ENCODE measurements at regions of chr19 and their contacts with region 1.

Region 1: GRCh38 chr19:17346109-17346671 is 8.8 kb downstream of the GTPBP3 start:
- DNase-seq: peak; percentile 79
- ATAC-seq: peak; percentile 98
- H3K4me3 Mint-ChIP-seq: no peak overlapping the region
- H3K27ac Mint-ChIP-seq: no peak overlapping the region
- H3K4me1 Mint-ChIP-seq: peaks cover 6% of the 10 kb centered on the region
- H3K27me3 Mint-ChIP-seq: peaks cover 15% of the 10 kb centered on the region
- CTCF ChIP-seq: peak; percentile 84

Region 2: GRCh38 chr19:17292286-17293097 is 53.7 kb before region 1 on chr19:
- CTCF ChIA-PET with region 1: no interaction called
- POLR2A ChIA-PET with region 1: no interaction called
- intact Hi-C with region 1: loop called (anchors 2 kb)
- DNase-seq: peak; percentile 90
- ATAC-seq: peak; percentile 91
- H3K4me3 Mint-ChIP-seq: peak overlapping the region; percentile 85
- H3K27ac Mint-ChIP-seq: peak overlapping the region; percentile 53
- H3K4me1 Mint-ChIP-seq: peaks cover 10% of the 10 kb centered on the region
- H3K27me3 Mint-ChIP-seq: peaks cover 2% of the 10 kb centered on the region
- CTCF ChIP-seq: no peak

Region 3: DNA sequence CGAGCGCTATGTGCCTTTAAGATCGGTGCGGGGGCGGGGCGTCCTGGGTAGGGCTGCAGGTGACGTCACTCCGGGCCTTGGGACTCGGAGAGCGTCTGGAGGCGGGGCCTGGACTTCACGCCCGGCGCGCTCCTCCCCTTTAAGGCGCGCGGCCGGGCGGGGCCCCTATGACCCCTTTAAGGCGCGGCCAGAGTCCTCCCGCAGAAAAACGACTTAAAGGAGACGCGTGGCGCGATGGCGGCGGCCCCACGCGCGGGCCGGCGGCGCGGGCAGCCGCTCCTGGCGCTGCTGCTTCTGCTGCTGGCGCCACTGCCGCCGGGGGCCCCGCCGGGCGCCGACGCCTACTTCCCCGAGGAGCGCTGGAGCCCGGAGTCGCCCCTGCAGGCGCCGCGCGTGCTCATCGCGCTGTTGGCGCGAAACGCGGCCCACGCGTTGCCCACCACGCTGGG is 209.3 kb after region 1 on chr19 and contains the start of gene COLGALT1:
- CTCF ChIA-PET with region 1: no interaction called
- POLR2A ChIA-PET with region 1: no interaction called
- intact Hi-C with region 1: no loop called
- DNase-seq: peak; percentile 94
- ATAC-seq: peak; percentile 93
- H3K4me3 Mint-ChIP-seq: peak within 1 kb of the TSS; percentile 84
- H3K27ac Mint-ChIP-seq: peak within 1 kb of the TSS; percentile 75
- H3K4me1 Mint-ChIP-seq: peaks cover 23% of the 10 kb centered on the region
- H3K27me3 Mint-ChIP-seq: no peaks in the 10 kb centered on the region
- CTCF ChIP-seq: no peak
- total RNA-seq, gene COLGALT1: 69.2 and 80.3 TPM in 2 replicates

Measured in activated B cell treated with CpG ODN at 0.5 μM for 24 hours (primary cell).